Cardiac septum (tissue), 1 donor: ENCODE measurements at regions of chr22 and their contacts with region 1.

Region 1: GRCh38 chr22:35914665-35915476 is 113.8 kb downstream of the RBFOX2 start:
- DNase-seq: no peak

Region 2: DNA sequence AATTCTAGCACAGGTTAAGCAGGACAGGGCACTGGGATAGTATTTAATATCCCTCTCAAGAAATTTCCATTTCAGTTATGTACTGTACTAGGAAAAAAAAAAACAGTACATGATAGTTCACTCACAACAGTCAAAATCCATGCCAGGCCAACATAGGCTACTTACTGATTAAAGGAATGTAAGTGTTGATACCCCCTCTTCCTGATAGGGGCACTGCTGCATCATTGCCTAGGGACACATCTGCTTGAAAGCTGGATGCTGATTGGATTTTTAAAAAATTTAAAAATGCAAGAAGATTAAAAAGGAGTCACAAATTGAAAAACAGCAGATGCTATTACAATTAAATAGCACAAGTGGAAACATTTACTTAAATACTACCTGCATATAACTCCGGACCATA is 153.8 kb before region 1 on chr22:
- intact Hi-C with region 1: loop called (anchors 10 kb)
- DNase-seq: no peak